ENCODE measurements at regions of chrX and their contacts with region 1.

Region 1: GRCh38 chrX:11540532-11541377 is 125.0 kb downstream of the ARHGAP6 start:
- DNase-seq: peak; percentile 59 to 73
- ATAC-seq: peak; percentile 86
- H3K4me3 ChIP-seq: no peak overlapping the region
- H3K27ac ChIP-seq: peak overlapping the region; percentile 67 to 81 (median 78)
- H3K4me1 ChIP-seq: peaks cover 0 to 12% of the 10 kb centered on the region in 2 donors
- H3K27me3 ChIP-seq: no peaks in the 10 kb centered on the region
- CTCF ChIP-seq: peak in 2 of 5 experiments; percentile 10 to 15
- POLR2A ChIP-seq: no peak

Region 2: GRCh38 chrX:10173316-10173900 is 1367.3 kb before region 1 on chrX:
- in situ Hi-C with region 1: no loop called
- intact Hi-C with region 1: loop called (anchors 10 kb)
- DNase-seq: peak; percentile 70 to 72
- ATAC-seq: peak; percentile 31 to 60
- H3K4me3 ChIP-seq: peak overlapping the region in 2 of 4 donors; percentile 5 to 25
- H3K27ac ChIP-seq: peak overlapping the region; percentile 84 to 92 (median 86)
- H3K4me1 ChIP-seq: peaks cover 34 to 56% of the 10 kb centered on the region in 2 donors
- H3K27me3 ChIP-seq: no peaks in the 10 kb centered on the region
- CTCF ChIP-seq: no peak
- POLR2A ChIP-seq: peak in 1 of 2 donors; percentile 33

Region 3: DNA sequence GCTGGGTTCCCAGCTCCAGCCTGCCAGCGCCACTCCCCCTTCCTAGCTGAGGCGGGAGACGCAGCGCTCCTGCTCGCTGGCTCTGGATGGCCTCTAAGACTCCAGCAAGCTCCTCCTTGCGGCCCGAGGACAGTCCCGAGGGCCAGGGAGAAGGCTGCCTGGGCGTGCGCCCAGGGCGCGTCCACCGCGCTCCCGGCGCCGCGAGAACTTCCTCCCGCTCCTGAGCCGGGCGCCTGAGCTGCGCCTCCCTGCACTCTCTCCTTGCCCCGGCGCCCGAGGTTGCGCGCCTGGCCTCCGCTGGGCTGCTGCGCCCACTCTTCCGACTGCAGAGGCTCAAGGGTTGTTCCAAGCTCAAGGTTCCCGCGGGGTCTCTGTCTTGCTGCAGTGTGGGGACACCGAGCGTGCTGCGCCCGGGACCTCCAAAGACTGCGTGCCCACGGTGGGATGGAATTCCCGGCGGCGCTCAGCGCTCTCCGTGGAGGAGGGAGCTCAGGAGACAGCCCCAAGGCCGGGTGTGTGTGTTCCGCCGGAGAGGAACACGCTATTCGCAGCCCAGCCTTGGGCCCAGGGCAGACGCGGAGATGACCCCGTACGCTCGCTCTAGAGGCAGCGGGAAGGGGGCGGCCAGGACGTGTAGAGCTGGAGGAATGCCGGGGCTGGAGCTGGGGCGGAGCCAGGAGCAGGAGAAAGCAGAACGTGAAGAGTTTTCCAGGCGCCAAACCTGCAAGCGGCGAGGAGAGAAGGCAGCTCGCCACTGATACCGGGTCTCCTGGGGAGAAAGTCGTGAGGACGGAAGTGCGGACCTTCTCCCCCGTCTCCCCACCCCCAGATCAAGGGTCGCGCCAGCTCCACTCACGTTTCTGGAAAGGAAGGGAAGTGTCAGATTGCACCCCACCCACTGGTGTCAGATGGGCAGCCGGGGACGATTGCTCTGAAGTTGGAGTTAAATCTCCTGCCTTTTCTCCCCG is 124.7 kb after region 1 on chrX and contains the start of gene ARHGAP6:
- in situ Hi-C with region 1: no loop called
- intact Hi-C with region 1: loop called (anchors 5 kb)
- DNase-seq: peak; percentile 35 to 64
- ATAC-seq: peak; percentile 64 to 77
- H3K4me3 ChIP-seq: peak within 1 kb of the TSS; percentile 61 to 75 (median 70)
- H3K27ac ChIP-seq: peak within 1 kb of the TSS; percentile 76 to 82 (median 80)
- H3K4me1 ChIP-seq: no peaks in the 10 kb centered on the region
- H3K27me3 ChIP-seq: no peaks in the 10 kb centered on the region
- CTCF ChIP-seq: no peak
- POLR2A ChIP-seq: peak; percentile 14 to 18
- total RNA-seq, gene ARHGAP6: 10.7 to 18.0 (median 14.9) TPM

Measured in gastrocnemius medialis (tissue), 4 donors.